GM23248 (cell line): ENCODE measurements at regions of chr5 and their contacts with region 1.

Region 1: GRCh38 chr5:61162010-61162831 is at the start of gene SMIM15:
- DNase-seq: peak; percentile 94
- H3K4me3 ChIP-seq: peak within 1 kb of the TSS; percentile 82
- H3K27ac ChIP-seq: peak within 1 kb of the TSS; percentile 89
- H3K4me1 ChIP-seq: peaks cover 25% of the 10 kb centered on the region
- H3K27me3 ChIP-seq: no peaks in the 10 kb centered on the region
- total RNA-seq, gene SMIM15: 39.6 and 42.5 TPM in 2 replicates

Region 2: GRCh38 chr5:60649283-60649917 is 512.8 kb before region 1 on chr5:
- in situ Hi-C with region 1: no loop called
- DNase-seq: peak; percentile 66
- H3K4me3 ChIP-seq: no peak overlapping the region
- H3K27ac ChIP-seq: no peak overlapping the region
- H3K4me1 ChIP-seq: peaks cover 6% of the 10 kb centered on the region
- H3K27me3 ChIP-seq: no peaks in the 10 kb centered on the region

Region 3: DNA sequence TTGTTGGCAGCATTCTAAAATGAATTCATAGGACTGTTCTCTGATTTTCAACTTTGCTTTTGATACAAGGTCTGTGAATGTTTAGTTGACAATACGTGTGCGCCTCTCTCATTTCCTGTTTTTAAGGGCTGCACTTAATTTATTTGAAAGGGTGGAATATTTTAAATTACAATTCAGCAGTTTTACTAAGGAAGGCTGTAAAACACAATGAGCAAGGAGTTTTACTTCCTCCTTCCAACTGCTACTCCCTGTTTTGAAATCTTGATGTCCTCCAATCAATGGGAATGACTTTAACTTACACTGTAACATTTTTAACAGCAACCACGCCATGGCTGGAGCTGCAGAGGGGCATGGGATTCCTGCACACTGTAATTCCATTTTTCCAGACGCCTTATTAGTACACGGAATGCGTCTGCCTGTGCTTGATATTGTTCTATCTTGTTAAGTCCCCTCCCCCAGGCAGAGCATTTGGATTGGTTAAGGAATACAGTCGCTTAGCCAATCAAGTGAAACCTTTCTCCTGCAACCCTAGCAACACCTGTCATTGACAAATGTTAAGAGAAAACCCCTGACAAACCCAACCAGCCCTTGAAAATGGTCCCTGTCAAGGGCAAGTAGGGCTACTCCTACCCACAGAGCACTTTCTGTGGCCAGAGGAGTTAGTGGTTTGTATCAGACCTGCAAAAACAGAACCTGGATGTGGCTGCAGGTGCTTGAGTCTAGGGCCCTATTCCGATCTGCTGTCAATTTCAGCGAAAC is 157.3 kb after region 1 on chr5:
- in situ Hi-C with region 1: loop called (anchors 10 kb)
- DNase-seq: no peak
- H3K4me3 ChIP-seq: no peak overlapping the region
- H3K27ac ChIP-seq: no peak overlapping the region
- H3K4me1 ChIP-seq: peaks cover 12% of the 10 kb centered on the region
- H3K27me3 ChIP-seq: no peaks in the 10 kb centered on the region

Region 4: GRCh38 chr5:61658592-61659008 is 496.4 kb after region 1 on chr5:
- in situ Hi-C with region 1: loop called (anchors 25 kb)
- DNase-seq: peak; percentile 77
- H3K4me3 ChIP-seq: no peak overlapping the region
- H3K27ac ChIP-seq: no peak overlapping the region
- H3K4me1 ChIP-seq: no peaks in the 10 kb centered on the region
- H3K27me3 ChIP-seq: peaks cover 12% of the 10 kb centered on the region; the same call in 1 of the 2 replicates